ENCODE measurements at regions of chr1 and their contacts with region 1.

Region 1: DNA sequence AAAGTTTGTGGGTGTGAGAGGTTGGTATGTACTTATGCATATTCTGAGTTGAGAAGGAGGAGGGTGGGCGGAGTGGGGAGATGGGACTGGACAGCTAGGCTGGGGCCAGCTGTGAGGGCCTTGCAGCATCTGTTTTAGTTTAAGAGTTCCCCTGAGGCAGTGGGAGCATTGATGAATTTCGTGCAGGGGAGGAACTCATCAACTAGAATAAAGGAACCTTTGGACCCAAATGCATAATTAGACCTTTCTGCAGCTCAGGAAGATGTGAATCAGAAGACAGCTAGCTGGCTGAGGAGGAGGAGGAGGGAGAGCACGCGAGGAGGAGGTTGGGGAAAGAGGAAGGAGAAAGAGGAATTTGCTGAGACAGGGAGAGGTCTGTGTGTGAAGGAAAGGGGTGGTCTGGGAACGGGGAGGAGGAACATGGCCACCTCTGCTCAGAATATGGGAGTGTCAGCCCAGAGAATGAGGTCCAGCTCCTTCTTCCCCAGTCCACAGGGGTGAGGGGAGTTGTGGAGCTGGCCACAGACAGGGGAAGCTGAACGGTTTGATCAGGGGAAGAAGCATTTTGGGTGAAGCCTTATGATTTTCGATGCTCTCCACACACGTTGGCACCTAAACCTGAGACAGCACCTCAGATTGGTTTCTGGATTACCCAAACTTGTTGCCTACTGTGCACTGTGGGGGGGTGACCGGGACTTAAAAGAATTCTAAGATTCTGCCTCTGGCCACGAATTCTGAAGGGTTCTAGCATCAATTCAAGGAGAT is 27.7 kb downstream of the MYOG start:
- DNase-seq: no peak
- ATAC-seq: peak in 1 of 2 donors; percentile 31

Region 2: DNA sequence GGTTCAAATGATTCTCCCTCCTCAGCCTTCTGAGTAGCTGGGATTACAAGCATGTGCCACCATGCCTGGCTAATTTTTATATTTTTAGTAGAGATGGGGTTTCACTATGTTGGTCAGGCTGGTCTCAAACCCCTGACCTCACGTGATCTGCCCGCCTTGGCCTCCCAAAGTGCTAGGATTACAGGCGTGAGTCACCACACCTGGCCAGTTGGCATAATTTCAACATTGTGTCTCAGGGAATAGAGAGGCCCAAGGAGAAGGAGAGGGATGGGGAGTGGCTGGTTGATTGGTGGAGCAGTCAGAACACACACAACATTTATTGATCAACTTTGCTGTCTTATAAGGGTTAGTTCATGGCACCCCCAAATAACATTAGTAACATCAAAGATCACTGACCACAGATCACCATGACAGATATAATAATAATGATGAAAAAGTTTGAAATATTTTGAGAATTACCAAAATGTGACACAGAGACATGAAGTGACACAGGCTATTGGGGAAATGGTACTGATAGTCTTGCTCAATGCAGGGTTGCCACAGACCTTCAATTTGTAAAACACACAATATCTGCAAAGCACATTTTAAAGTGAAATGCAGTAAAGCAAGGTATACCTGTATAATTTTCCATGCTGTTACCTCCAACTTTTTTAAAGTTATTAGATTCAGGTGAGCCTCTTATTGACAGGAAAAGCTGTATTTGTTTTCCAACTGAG is 75.2 kb before region 1 on chr1:
- intact Hi-C with region 1: no loop called
- DNase-seq: no peak
- ATAC-seq: no peak

Region 3: DNA sequence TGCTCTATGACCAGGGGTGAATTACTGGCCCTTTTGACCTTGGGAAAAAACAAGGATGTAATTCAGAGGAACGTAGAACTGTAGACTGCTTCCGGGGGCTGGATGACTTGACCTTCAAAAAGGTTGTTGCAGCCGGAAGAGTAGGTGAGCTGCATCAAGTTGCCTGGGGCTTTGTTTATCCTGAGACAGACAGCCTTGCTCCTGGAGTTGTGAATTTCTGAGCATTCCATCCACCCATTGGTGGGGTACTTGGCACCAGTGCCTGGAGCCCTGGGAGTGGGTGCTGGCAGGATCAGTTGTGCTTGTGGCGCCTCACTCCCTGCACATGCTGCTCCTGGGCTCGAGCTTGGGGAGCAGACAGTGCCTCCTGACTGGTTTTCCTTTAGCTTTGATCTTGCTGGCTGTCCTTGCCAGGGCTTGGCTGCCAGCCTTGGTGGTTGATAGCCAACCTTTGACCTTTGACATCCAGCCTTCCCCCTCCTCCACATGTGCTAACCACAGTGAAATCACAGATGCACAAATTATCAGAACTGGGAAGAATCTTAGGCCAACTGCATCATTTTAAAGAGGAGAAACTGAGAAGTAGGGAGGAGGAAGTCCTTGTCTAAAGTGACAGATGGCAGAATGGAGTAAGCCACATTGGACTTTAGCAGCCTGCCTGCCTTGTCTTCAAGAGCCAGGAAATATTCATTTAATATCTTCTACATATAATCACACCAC is 44.0 kb after region 1 on chr1:
- intact Hi-C with region 1: loop called in 1 of 2 experiments (anchors 5 kb)
- DNase-seq: no peak
- ATAC-seq: no peak

Measured in left cardiac atrium (tissue), 4 donors.